Activated B cell treated with CpG ODN at 0.5 μM for 24 hours (primary cell): ENCODE measurements at regions of chr4 and their contacts with region 1.

Region 1: DNA sequence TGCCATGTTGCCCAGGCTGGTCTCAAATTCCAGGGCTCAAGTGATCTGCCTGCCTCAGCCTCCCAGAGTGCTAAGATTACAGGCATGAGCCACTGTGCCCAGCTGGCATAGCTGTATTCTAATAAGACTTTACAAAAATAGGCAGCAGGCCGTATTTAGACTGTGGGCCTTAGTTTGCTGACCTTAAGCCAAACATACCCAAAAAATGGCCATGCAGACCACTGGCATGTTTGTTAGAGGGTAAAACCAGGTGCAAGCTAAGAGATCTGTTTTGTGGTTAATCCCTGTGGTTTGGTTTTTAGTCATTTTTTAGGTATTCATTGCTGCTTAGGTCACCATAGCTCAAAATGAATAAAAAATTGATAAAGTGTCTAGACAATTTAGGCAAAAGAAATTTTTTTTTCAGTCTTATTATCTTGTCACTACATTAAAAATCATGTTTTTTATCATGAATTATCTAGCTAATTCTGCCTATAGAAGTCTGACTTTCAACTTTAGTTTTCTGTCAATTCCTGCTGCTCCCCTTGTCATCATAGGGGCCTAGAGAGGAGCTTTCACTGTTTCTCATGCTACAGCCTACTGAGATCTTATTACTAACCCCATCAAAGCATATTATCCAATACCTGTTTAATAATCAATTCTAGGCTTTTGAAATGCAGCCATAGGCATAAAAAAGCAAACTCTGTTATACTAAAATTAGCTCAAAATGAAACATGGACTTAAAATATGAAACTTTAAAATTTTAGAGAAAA is 7.5 kb upstream of the SPINK2 start:
- DNase-seq: no peak
- ATAC-seq: no peak
- H3K4me3 Mint-ChIP-seq: no peak overlapping the region
- H3K27ac Mint-ChIP-seq: no peak overlapping the region
- H3K4me1 Mint-ChIP-seq: peaks cover 3% of the 10 kb centered on the region
- H3K27me3 Mint-ChIP-seq: no peaks in the 10 kb centered on the region
- CTCF ChIP-seq: no peak

Region 2: DNA sequence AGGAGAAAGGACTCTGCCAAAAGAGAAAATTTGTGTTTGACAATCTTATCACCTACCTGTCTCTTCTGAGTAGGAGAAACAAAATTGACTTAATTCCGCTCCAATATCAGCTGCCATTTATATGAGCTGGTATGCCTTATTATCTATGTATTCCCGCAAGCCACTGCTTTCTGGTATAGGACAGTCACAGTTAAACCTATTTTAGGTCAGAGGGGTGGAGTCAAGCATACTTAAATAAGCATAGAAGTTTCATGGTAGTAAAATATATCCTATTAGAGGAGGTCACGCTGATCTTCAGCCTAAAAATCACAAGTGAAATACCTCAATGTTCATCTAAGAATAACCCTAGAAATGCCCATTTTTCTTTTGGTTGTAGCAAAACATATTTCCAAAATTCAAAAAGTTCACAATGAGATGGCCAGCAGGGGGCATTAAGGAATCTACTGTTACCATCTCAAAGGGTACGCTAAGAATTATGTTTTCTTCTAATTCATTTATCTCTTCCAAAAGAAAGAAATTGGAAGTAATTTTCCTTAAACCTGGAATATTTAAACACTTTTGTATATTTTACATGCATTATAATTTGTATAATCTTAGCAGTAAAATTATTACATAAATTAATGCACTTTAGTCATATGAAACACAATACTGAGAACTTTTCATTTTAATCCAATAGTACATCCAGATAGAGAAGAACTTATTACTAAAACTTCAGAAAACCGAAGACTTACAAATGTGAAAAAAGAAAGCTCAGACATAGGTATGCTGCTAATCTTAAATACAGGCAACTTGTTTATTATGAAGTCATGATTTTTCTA is 404.1 kb before region 1 on chr4:
- CTCF ChIA-PET with region 1: interaction called, 87 read pairs
- POLR2A ChIA-PET with region 1: no interaction called
- intact Hi-C with region 1: no loop called
- DNase-seq: no peak
- ATAC-seq: no peak
- H3K4me3 Mint-ChIP-seq: no peak overlapping the region
- H3K27ac Mint-ChIP-seq: no peak overlapping the region
- H3K4me1 Mint-ChIP-seq: peaks cover 12% of the 10 kb centered on the region
- H3K27me3 Mint-ChIP-seq: no peaks in the 10 kb centered on the region
- CTCF ChIP-seq: peak; percentile 75